PC-9 (cell line): ENCODE measurements at regions of chr4 and their contacts with region 1.

Region 1: GRCh38 chr4:39527273-39528060 is at the start of gene UGDH:
- DNase-seq: peak; percentile 93 to 98
- H3K4me3 ChIP-seq: peak within 1 kb of the TSS; percentile 78
- H3K27ac ChIP-seq: peak within 1 kb of the TSS; percentile 95
- H3K4me1 ChIP-seq: peaks cover 40% of the 10 kb centered on the region
- H3K27me3 ChIP-seq: no peaks in the 10 kb centered on the region
- CTCF ChIP-seq: no peak
- total RNA-seq, gene UGDH: 88.6 and 98.5 TPM in 2 replicates

Region 2: DNA sequence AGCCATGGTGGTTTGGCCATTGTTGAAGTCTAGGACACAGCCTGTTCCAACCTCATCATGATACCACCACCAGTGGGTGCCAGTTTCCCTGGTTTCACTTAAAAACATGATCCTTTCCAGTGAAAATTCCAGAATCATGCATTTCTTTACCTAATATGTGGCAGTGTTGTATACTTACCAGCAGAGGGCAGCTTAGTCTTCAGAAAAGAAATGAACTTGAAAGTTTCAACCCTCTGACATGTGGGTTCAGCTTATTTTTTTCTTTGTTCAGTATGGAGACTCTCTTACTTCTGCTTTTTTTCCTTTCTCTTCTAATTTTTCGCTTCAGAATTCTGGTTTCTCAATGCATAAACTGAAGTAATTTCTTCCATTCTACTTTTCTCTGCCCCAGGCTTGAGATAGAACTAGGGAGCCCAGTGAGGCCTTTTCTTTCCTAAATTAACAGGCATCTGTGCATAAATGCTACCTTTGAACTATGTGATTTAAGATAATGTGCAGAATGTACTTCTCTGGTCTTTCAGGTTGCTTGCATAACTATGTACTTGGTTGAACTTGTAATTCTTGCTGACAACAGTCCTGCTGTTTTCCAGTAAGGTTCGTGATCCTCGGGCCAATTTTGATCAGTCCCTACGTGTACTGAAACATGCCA is 57.9 kb before region 1 on chr4:
- CTCF ChIA-PET with region 1: no interaction called
- POLR2A ChIA-PET with region 1: no interaction called
- intact Hi-C with region 1: loop called (anchors 5 kb)
- DNase-seq: peak; percentile 52 to 77
- H3K4me3 ChIP-seq: no peak overlapping the region
- H3K27ac ChIP-seq: peak overlapping the region; percentile 65
- H3K4me1 ChIP-seq: peaks cover 9% of the 10 kb centered on the region
- H3K27me3 ChIP-seq: no peaks in the 10 kb centered on the region
- CTCF ChIP-seq: peak; percentile 93

Region 3: GRCh38 chr4:39591290-39591689 is 63.8 kb after region 1 on chr4:
- CTCF ChIA-PET with region 1: interaction called, 11 read pairs
- POLR2A ChIA-PET with region 1: interaction called, 3 read pairs
- intact Hi-C with region 1: no loop called
- DNase-seq: peak in 1 of 2 experiments; percentile 57
- H3K4me3 ChIP-seq: no peak overlapping the region
- H3K27ac ChIP-seq: no peak overlapping the region
- H3K4me1 ChIP-seq: no peaks in the 10 kb centered on the region
- H3K27me3 ChIP-seq: no peaks in the 10 kb centered on the region
- CTCF ChIP-seq: peak; percentile 58

Region 4: GRCh38 chr4:39697740-39698423 is 170.4 kb after region 1 on chr4 and contains the start of gene UBE2K:
- CTCF ChIA-PET with region 1: no interaction called
- POLR2A ChIA-PET with region 1: interaction called, 6 read pairs
- intact Hi-C with region 1: loop called (anchors 5 kb)
- DNase-seq: peak; percentile 73 to 91
- H3K4me3 ChIP-seq: peak within 1 kb of the TSS; percentile 78
- H3K27ac ChIP-seq: peak within 1 kb of the TSS; percentile 71
- H3K4me1 ChIP-seq: peaks cover 31% of the 10 kb centered on the region
- H3K27me3 ChIP-seq: no peaks in the 10 kb centered on the region
- CTCF ChIP-seq: no peak
- total RNA-seq, gene UBE2K: 89.4 and 129 TPM in 2 replicates